Activated CD8-positive, alpha-beta memory T cell treated with anti-CD3 and anti-CD28 coated beads, Interleukin-2, amount 10 ng/mL, durations not matched to agents 7 days and 5 days (primary cell): ENCODE measurements at regions of chr3 and their contacts with region 1.

Region 1: DNA sequence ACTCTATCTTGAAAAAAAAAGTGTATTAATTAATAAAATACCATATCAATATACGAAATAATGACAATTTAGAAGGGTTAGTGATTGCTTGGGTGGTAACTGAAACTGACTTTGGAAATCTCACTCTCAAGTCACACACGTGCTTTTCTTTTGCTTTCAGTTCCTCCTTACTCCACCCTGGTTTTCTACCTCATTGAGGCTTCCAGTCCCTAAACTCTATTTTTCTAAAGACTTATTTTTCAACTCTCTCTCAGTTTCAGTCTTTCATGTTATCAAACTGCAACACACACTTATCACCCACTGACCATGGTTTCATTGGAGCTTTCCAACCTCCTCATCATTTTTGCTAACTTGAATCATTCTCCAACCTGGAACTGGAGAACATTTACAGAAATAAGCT is 23.5 kb downstream of the IL12A start:
- DNase-seq: no peak
- ATAC-seq: peak; percentile 81
- H3K4me3 Mint-ChIP-seq: no peak overlapping the region
- H3K27ac Mint-ChIP-seq: peak overlapping the region; percentile 74
- H3K4me1 Mint-ChIP-seq: peaks cover 44% of the 10 kb centered on the region
- H3K27me3 Mint-ChIP-seq: no peaks in the 10 kb centered on the region

Region 2: GRCh38 chr3:159988617-159989271 is 23.4 kb before region 1 on chr3 and contains the start of gene IL12A:
- CTCF ChIA-PET with region 1: interaction called, 128 read pairs
- DNase-seq: peak; percentile 89
- ATAC-seq: peak; percentile 96
- H3K4me3 Mint-ChIP-seq: peak within 1 kb of the TSS; percentile 76
- H3K27ac Mint-ChIP-seq: peak within 1 kb of the TSS; percentile 66
- H3K4me1 Mint-ChIP-seq: peaks cover 19% of the 10 kb centered on the region
- H3K27me3 Mint-ChIP-seq: peaks cover 8% of the 10 kb centered on the region
- total RNA-seq, gene IL12A: 0.63 to 1.4 TPM

Region 3: GRCh38 chr3:160027541-160028195 is 15.6 kb after region 1 on chr3:
- CTCF ChIA-PET with region 1: interaction called, 16 read pairs
- DNase-seq: peak; percentile 55
- ATAC-seq: peak; percentile 86
- H3K4me3 Mint-ChIP-seq: peak overlapping the region; percentile 40
- H3K27ac Mint-ChIP-seq: peak overlapping the region; percentile 95
- H3K4me1 Mint-ChIP-seq: peaks cover 43% of the 10 kb centered on the region
- H3K27me3 Mint-ChIP-seq: no peaks in the 10 kb centered on the region